ENCODE measurements at regions of chr12 and their contacts with region 1.

Region 1: GRCh38 chr12:69570545-69571399 is 14.5 kb upstream of the CCT2 start:
- DNase-seq: no peak
- H3K4me3 ChIP-seq: no peak overlapping the region
- H3K27me3 ChIP-seq: no peaks in the 10 kb centered on the region
- CTCF ChIP-seq: peak; percentile 66

Region 2: GRCh38 chr12:69359531-69360347 is 211.0 kb before region 1 on chr12 and contains the start of gene YEATS4:
- CTCF ChIA-PET with region 1: interaction called, 6 read pairs
- POLR2A ChIA-PET with region 1: interaction called, 12 read pairs
- DNase-seq: peak; percentile 46
- H3K4me3 ChIP-seq: peak within 1 kb of the TSS; percentile 93
- H3K27me3 ChIP-seq: no peaks in the 10 kb centered on the region
- CTCF ChIP-seq: no peak
- polyA plus RNA-seq, gene YEATS4: 7.8 and 9.1 TPM in 2 replicates

Region 3: DNA sequence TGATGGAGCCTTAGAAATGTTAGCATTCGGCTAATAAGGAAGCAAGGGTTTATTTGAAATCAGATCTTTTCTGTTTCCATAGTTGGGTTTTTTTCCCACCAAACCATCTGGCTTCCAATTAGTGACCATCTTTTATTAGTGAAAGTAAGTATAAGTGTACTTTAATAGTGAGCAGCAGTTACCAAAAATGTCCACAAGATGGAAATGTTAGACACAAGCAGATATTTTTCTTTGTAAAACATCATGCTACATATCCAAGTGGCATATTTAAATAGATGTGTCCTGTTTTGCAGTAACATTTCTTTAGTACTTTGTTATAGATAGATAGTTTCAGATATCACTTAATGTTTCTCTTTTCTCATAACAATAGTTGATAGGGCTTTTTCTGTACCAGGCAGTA is 182.4 kb before region 1 on chr12:
- CTCF ChIA-PET with region 1: interaction called, 24 read pairs
- POLR2A ChIA-PET with region 1: no interaction called
- DNase-seq: peak; percentile 34
- H3K4me3 ChIP-seq: no peak overlapping the region
- H3K27me3 ChIP-seq: no peaks in the 10 kb centered on the region
- CTCF ChIP-seq: peak; percentile 68

Region 4: GRCh38 chr12:69464428-69464827 is 106.3 kb before region 1 on chr12:
- CTCF ChIA-PET with region 1: no interaction called
- POLR2A ChIA-PET with region 1: no interaction called
- DNase-seq: no peak
- H3K4me3 ChIP-seq: no peak overlapping the region
- H3K27me3 ChIP-seq: no peaks in the 10 kb centered on the region
- CTCF ChIP-seq: no peak

Region 5: GRCh38 chr12:69719382-69720316 is 148.9 kb after region 1 on chr12:
- CTCF ChIA-PET with region 1: no interaction called
- POLR2A ChIA-PET with region 1: no interaction called
- DNase-seq: no peak
- H3K4me3 ChIP-seq: no peak overlapping the region
- H3K27me3 ChIP-seq: peaks cover 3% of the 10 kb centered on the region; the same call in 1 of the 2 replicates
- CTCF ChIP-seq: no peak